Activated B cell treated with CpG ODN at 0.5 μM for 24 hours (primary cell): ENCODE measurements at regions of chr11 and their contacts with region 1.

Region 1: GRCh38 chr11:59171508-59172322 is at the start of gene DTX4:
- DNase-seq: peak; percentile 82
- ATAC-seq: peak; percentile 78
- H3K4me3 Mint-ChIP-seq: peak within 1 kb of the TSS; percentile 96
- H3K27ac Mint-ChIP-seq: peak within 1 kb of the TSS; percentile 90
- H3K4me1 Mint-ChIP-seq: peaks cover 34% of the 10 kb centered on the region
- H3K27me3 Mint-ChIP-seq: no peaks in the 10 kb centered on the region
- CTCF ChIP-seq: no peak
- total RNA-seq, gene DTX4: 24.2 TPM in 2 replicates

Region 2: GRCh38 chr11:58609723-58610122 is 562.0 kb before region 1 on chr11:
- CTCF ChIA-PET with region 1: no interaction called
- POLR2A ChIA-PET with region 1: no interaction called
- intact Hi-C with region 1: no loop called
- DNase-seq: no peak
- ATAC-seq: no peak
- H3K4me3 Mint-ChIP-seq: no peak overlapping the region
- H3K27ac Mint-ChIP-seq: peak overlapping the region; percentile 53
- H3K4me1 Mint-ChIP-seq: peaks cover 40% of the 10 kb centered on the region
- H3K27me3 Mint-ChIP-seq: no peaks in the 10 kb centered on the region
- CTCF ChIP-seq: no peak

Region 3: GRCh38 chr11:58980159-58980843 is 191.4 kb before region 1 on chr11:
- CTCF ChIA-PET with region 1: no interaction called
- POLR2A ChIA-PET with region 1: no interaction called
- intact Hi-C with region 1: no loop called
- DNase-seq: no peak
- ATAC-seq: no peak
- H3K4me3 Mint-ChIP-seq: no peak overlapping the region
- H3K27ac Mint-ChIP-seq: no peak overlapping the region
- H3K4me1 Mint-ChIP-seq: peaks cover 15% of the 10 kb centered on the region
- H3K27me3 Mint-ChIP-seq: no peaks in the 10 kb centered on the region
- CTCF ChIP-seq: no peak

Region 4: DNA sequence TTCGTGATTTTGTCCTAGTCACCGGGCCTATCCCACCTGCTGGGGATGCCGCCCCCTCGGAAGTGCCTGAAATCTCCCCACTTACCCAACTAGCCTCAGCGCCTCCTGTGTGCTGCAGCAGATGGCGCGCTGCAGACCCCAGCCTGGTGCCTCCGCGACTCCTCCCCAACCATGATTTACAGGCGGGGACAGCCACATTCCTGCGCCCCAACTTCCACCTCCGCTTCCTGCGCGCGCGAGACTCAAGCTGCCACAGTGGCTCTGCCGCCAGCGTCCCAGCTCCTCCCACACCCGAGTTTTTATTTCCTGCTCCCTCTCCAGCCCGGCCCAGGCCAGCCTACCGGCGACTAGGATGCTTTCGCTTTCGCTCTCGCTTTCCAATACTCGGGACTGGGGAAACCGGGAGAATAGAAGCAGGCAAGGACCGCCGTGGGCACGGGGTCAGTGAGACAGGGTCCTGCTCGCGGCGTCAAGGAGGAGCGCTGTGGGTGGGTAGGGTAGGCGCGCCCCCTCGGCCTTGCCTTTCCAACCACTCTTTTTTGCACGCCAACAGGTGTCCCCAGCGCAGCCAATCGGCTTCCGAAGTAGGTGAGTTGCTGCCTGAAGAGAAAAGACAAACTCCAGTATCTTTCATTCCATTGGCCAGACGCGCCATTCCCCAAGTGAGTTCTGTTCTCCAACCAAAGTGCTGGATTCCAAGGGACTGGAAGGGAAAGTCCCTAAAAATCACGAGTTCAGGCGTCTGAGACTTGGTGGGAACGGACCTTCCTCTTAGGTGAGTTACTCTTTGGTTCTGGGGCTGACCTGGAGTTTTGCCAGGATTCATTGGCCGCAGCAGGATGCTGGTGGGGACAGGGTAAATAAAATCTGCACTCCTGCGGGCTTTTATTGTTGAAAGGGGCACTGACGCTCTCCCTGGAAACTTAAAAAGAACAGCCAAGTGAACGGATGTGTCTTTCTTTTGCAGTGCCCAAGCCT is 28.9 kb before region 1 on chr11 and contains the start of gene FAM111A:
- CTCF ChIA-PET with region 1: interaction called, 5 read pairs
- POLR2A ChIA-PET with region 1: interaction called, 12 read pairs
- intact Hi-C with region 1: no loop called
- DNase-seq: peak; percentile 73
- ATAC-seq: peak; percentile 76
- H3K4me3 Mint-ChIP-seq: peak within 1 kb of the TSS; percentile 99
- H3K27ac Mint-ChIP-seq: peak within 1 kb of the TSS; percentile 99
- H3K4me1 Mint-ChIP-seq: peaks cover 71% of the 10 kb centered on the region
- H3K27me3 Mint-ChIP-seq: no peaks in the 10 kb centered on the region
- CTCF ChIP-seq: no peak
- total RNA-seq, gene FAM111A: 51.5 and 64.3 TPM in 2 replicates

Region 5: GRCh38 chr11:59197991-59198390 is 26.3 kb after region 1 on chr11:
- CTCF ChIA-PET with region 1: interaction called, 94 read pairs
- POLR2A ChIA-PET with region 1: interaction called, 69 read pairs
- intact Hi-C with region 1: loop called (anchors 1 kb)
- DNase-seq: no peak
- ATAC-seq: peak; percentile 26
- H3K4me3 Mint-ChIP-seq: no peak overlapping the region
- H3K27ac Mint-ChIP-seq: peak overlapping the region; percentile 88
- H3K4me1 Mint-ChIP-seq: peaks cover 82% of the 10 kb centered on the region
- H3K27me3 Mint-ChIP-seq: no peaks in the 10 kb centered on the region
- CTCF ChIP-seq: no peak

Region 6: DNA sequence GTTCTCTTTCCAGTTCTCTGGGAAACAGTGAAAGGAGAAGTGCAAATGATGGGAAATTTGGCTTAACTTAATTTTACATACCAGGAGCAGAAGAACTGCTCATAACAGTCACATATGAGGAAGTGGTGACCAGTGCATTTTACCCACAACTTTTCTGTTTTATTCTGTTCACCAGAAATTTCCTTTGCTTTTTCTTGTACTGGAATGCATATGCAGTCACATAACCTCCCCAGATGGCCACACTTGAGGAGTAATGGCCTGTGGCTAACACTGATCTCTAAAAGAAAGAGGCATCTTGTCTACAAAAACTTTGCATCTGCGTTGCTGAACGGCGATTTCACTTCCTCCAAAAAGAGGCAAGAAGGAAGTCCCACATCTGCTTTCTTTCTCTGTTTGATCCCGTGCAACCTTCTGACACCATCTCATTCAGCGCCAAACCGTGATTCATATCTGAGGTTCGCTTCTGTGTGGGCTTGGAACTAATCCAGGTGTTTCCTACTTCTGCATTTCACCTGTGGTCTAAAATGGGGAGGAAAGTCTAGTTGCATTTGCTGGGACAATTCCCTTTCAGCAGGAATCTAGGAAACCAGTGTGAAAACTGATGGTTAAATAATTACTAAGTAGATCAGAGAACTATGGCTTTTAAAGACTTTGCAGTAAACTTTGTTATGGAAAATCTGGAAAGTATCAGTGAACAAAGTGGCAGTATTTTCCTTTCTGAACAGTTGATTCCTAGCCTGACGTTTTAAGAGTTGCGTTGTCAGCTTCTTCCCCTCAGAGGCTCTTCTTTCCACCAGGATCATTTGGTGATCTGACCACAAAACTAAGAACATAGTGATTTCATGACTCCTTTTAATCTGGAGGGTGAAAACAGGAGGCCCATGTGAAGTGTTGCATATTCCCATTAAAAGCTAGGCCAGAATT is 45.2 kb after region 1 on chr11:
- CTCF ChIA-PET with region 1: interaction called, 27 read pairs
- POLR2A ChIA-PET with region 1: interaction called, 70 read pairs
- intact Hi-C with region 1: loop called (anchors 1 kb)
- DNase-seq: peak; percentile 35
- ATAC-seq: peak; percentile 69
- H3K4me3 Mint-ChIP-seq: peak overlapping the region; percentile 52
- H3K27ac Mint-ChIP-seq: peak overlapping the region; percentile 91
- H3K4me1 Mint-ChIP-seq: peaks cover 100% of the 10 kb centered on the region
- H3K27me3 Mint-ChIP-seq: no peaks in the 10 kb centered on the region
- CTCF ChIP-seq: no peak

Region 7: DNA sequence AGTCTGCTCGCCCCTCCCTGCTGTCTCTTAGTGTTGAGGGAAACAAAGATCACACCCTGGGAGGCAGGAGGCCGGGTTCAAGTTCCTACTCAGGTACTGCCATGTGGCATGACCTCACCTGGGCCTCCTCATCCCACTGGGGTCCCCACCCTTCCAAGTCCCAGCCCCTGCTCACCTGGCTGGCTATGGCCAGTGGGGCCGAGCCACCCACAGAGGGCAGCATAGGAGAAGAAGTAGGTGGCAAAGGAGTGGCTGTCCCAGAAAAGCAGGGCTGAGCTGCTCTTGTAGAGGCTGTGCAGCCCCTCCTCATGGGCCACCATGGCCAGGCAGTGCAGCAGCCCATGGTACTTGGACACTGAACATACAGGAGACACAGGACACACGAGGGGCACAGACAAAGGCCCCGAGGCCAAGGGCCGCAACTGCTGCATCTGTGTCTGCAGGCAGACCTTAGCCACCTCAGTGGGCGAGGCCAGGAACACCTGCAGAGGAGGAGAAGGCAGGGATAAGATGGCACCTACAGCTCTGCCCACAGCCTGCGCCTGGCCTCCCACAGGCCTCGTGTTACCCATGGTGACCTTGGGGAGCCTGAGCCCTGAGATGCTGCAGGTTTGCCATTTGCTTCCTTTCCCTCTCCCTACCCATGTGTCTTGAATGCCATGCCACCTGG is 91.6 kb after region 1 on chr11:
- CTCF ChIA-PET with region 1: interaction called, 35 read pairs
- POLR2A ChIA-PET with region 1: interaction called, 4 read pairs
- intact Hi-C with region 1: loop called (anchors 1 kb)
- DNase-seq: peak; percentile 52
- ATAC-seq: peak; percentile 65
- H3K4me3 Mint-ChIP-seq: no peak overlapping the region
- H3K27ac Mint-ChIP-seq: no peak overlapping the region
- H3K4me1 Mint-ChIP-seq: peaks cover 71% of the 10 kb centered on the region
- H3K27me3 Mint-ChIP-seq: no peaks in the 10 kb centered on the region
- CTCF ChIP-seq: no peak

Region 8: DNA sequence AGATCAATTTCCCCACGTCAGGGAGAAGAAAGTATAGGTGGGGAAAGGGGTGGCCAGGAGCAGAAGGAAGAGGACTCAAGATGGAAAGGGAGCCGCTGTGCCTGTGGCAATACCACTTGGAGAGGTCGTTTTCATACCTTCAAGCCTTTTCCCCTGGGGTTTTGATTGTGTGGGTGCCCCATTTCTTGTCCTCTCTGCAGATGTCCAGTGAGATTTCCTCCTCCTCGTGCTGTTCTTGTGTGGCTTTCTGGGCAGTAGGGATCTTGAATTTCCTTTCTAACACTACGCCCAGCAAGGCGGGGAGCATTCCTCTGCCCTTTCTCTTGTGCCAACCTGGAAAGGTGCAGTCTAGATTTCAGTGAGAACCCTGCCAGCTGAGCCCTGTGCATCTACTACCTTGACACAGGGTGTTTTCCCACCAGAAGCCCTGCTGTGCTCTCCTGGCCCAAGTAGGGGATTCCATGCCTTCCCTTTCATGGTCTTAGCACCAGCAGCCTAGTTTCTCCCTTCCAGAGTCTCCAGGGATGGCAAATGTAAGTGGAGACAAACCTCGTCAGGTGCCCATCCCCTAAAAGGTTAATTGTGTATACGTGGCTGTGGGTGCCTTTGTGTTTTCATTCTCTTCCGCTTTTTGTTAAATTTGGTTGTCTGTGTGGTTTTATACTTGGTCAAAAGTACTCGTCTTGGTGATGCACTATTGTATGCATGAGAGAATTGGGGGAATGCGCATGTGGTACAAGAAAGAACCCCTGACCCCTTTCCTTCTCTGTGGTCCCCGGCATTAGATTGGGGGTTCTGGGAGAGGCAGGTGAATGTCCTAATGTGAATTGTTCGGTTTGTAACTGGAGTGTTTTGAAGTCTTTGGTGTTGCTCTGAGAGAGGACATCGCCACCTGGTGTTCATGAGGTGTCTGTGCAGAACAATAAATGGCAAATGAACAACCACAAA is 112.4 kb after region 1 on chr11:
- CTCF ChIA-PET with region 1: interaction called, 9 read pairs
- POLR2A ChIA-PET with region 1: interaction called, 6 read pairs
- intact Hi-C with region 1: loop called (anchors 1 kb)
- DNase-seq: peak; percentile 55
- ATAC-seq: peak; percentile 73
- H3K4me3 Mint-ChIP-seq: peak overlapping the region; percentile 70
- H3K27ac Mint-ChIP-seq: peak overlapping the region; percentile 87
- H3K4me1 Mint-ChIP-seq: peaks cover 57% of the 10 kb centered on the region
- H3K27me3 Mint-ChIP-seq: no peaks in the 10 kb centered on the region
- CTCF ChIP-seq: peak; percentile 59

Region 9: GRCh38 chr11:59368238-59369022 is 196.7 kb after region 1 on chr11:
- CTCF ChIA-PET with region 1: no interaction called
- POLR2A ChIA-PET with region 1: no interaction called
- intact Hi-C with region 1: no loop called
- DNase-seq: peak; percentile 14
- ATAC-seq: peak; percentile 64
- H3K4me3 Mint-ChIP-seq: peak overlapping the region; percentile 33
- H3K27ac Mint-ChIP-seq: no peak overlapping the region
- H3K4me1 Mint-ChIP-seq: peaks cover 36% of the 10 kb centered on the region
- H3K27me3 Mint-ChIP-seq: no peaks in the 10 kb centered on the region
- CTCF ChIP-seq: no peak

Region 10: DNA sequence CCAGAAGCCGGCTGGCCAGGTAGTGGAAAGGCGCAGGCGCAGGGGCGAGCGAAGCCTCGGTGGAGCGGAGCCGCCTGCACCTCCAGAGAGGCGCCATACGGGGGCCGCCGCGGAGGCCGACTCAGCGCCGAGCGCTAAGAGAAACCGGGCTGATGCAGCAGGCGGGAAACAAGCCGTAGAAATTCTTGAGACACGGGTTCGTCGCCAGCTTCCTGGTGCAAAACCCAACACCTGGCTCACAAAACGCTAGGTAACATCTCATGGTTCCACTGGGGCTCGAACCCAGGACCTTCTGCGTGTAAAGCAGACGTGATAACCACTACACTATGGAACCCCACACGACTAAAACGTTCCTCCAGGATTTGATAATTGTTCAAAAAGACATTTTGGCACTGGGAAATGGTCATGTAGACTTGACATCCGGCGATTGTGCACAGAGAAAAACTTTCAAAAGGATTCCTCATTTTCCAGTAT is 378.7 kb after region 1 on chr11:
- CTCF ChIA-PET with region 1: no interaction called
- POLR2A ChIA-PET with region 1: no interaction called
- intact Hi-C with region 1: loop called (anchors 10 kb)
- DNase-seq: peak; percentile 75
- ATAC-seq: peak; percentile 91
- H3K4me3 Mint-ChIP-seq: peak overlapping the region; percentile 87
- H3K27ac Mint-ChIP-seq: peak overlapping the region; percentile 94
- H3K4me1 Mint-ChIP-seq: peaks cover 31% of the 10 kb centered on the region
- H3K27me3 Mint-ChIP-seq: no peaks in the 10 kb centered on the region
- CTCF ChIP-seq: peak; percentile 43